GM10248 (cell line): ENCODE measurements at regions of chr7 and their contacts with region 1.

Region 1: DNA sequence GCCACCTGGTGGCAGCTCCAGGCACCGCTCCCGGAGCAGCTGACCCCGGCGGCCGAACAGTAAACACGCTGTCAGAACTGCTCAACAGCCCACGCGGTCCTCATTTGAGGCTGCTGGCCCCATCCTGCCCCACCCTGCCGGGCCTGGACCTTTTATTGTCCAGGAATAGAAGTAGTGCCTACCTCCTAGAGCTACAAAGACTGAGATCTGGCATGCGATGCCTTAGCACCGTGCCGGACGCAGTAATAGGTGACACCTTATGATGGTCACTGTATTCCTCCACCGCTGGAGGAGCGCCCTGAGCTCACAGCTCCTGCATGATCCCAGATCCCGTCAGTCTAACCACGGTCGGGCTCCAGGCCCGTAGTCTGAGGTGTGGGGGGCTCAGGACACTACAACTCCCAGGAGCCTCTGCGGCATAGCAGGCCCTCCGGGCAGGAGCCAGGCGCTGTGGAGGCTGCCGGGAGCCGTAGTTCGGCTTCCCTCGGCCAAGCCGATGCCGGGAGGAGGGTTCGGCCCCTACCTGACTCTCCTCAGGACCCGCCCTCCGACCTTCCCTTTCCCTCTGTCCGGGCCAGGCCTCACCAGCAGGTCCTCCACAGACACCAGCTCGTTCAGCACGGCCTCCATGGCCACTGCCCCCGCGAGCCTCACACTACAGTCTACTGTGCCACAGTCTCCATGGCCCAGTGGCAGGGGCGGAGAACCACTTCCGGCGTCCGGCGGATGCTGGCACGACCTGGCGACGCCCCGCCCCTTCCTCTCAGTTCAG is at the start of gene FIS1:
- DNase-seq: peak; percentile 93
- CTCF ChIP-seq: peak; percentile 92

Region 2: GRCh38 chr7:101217388-101218235 is 26.9 kb before region 1 on chr7 and contains the starts of genes PLOD3 and ZNHIT1:
- CTCF ChIA-PET with region 1: interaction called, 68 read pairs
- POLR2A ChIA-PET with region 1: interaction called, 6 read pairs
- DNase-seq: peak; percentile 99
- CTCF ChIP-seq: peak; percentile 15

Region 3: DNA sequence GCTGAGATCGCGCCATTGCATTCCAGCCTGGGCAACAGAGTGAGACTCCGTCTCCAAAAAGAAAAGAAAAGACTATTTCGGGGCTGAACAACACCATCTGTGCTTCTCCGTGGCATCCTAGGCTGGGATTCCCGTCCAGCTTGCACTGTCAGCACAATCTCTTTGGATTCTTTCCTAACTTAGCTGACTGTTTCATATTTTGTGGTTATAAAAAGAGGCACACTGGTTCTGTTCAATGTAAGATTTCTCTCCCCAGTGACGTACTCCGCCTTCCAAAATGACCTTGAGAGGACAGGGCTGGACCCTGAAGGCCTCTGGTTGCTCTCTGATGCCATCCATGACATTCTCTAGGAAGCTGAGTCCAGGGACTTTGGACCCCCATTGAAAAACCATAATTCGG is 17.8 kb before region 1 on chr7:
- CTCF ChIA-PET with region 1: interaction called, 49 read pairs
- POLR2A ChIA-PET with region 1: interaction called, 3 read pairs
- DNase-seq: no peak
- CTCF ChIP-seq: no peak

Region 4: DNA sequence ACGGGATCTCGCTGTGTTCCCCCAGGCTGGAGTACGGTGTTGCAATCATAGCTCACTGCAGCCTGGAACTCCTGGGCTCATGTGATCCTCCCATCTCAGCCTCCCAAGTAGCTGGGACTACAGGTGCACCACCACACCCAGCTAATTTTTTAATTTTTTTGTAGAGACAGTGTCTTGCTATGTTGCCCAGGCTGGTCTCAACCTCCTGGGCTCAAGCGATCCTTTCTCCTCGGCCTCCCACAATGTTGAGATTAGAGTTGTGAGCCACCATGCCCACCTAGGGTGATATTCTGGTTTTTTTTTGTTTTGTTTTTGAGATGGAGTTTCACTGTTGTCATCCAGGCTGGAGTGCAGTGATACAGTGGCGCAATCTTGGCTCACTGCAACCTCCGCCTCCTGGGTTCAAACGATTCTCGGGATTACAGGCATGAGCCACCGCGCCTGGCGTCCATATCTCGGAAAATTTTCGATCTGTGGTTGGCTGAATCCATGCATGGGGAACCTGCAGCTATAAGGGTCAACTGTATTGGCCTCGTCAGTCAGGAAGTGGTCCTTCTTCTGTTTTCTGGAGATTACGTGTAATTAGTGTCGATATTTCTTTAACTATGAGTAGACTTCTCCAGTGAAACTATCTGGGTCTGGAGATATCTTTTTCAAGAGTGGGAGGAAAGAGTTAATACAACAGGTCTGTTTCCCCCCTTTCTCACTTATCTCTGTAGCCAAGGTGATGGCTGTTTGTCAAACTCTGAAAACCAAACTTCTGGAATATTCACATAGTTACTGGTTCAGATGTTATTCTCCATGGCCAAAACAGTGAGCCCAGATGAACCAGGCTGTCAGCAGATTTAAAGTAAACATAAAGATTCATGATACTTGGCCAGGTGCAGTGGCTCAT is 21.3 kb after region 1 on chr7:
- CTCF ChIA-PET with region 1: no interaction called
- POLR2A ChIA-PET with region 1: no interaction called
- DNase-seq: no peak
- CTCF ChIP-seq: no peak

Region 5: GRCh38 chr7:101287032-101287431 is 42.5 kb after region 1 on chr7:
- CTCF ChIA-PET with region 1: interaction called, 18 read pairs
- POLR2A ChIA-PET with region 1: no interaction called
- DNase-seq: no peak
- CTCF ChIP-seq: no peak

Region 6: DNA sequence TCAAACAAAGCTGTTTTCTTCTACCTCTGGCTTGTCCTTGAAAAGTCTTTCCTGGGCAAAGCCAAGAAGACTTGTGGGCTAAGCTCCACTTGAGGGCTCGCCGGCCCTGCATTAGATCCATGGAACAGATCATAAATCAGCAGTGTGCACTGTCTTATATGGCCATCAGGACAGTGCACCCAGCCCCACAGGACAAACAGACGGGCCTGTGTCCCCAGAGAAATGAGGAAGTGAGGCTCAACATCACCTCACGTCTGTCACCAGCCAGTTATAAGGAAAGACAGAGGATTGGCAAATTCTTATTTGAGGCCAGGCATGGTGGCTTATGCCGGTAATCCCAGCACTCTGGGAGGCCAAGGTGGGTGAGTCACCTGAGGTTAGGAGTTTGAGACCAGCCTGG is 89.4 kb after region 1 on chr7:
- CTCF ChIA-PET with region 1: no interaction called
- POLR2A ChIA-PET with region 1: no interaction called
- DNase-seq: no peak
- CTCF ChIP-seq: no peak

Region 7: DNA sequence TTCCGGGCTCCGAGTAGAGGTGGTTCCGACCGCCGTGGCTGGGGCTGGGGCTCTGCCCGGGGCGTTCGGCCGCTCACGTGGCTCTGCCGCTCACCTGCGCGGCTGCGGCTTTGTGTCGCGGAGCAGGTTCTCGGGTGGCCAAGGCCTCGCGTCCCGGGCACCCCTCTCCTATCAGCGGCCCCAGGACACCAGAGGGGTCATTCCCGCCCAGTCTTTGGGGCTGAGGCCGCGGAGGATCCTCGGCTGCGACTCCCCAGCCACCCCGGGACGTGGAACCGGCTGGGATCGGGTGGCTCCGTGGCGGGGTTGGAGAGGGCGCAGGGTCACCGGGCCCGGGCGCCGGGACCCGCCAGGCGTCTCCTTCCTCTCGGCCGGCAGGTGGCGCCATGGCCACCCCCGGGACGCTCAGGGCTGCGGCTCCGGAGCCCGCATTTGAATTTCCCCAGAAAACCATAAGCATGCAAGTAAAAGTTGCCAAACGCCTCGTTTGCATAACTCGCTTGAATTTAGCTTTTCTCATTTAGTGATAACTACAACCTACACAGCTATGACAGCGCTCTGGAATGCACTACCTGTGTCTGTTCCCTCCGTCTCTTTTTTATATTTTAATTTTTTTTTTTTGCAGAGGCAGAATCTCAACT is 119.3 kb after region 1 on chr7:
- CTCF ChIA-PET with region 1: no interaction called
- POLR2A ChIA-PET with region 1: no interaction called
- DNase-seq: peak; percentile 87
- CTCF ChIP-seq: peak; percentile 79

Region 8: GRCh38 chr7:101494602-101495329 is 250.2 kb after region 1 on chr7:
- CTCF ChIA-PET with region 1: no interaction called
- POLR2A ChIA-PET with region 1: no interaction called
- DNase-seq: no peak
- CTCF ChIP-seq: no peak